K562 (cell line): ENCODE measurements at regions of chr2 and their contacts with region 1.

Region 1: DNA sequence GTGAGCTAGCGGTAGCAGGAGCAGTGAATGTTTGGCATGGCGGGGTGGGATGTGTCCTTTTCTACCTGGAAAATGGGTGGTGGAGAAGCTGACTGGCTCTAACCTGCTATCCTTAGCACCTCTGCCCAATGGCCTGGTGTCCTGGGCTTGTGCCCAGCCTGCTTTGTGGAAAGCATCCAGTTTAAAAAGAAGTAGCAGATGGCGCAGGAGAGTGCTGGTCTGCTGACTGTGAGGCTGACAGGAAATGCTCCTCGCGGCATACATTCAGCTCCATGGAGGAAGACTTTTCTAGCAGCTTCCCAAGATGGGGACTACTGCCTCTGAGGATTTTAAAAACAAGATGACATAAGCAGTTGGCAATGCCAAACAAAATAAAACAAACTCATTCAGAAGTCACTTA is 56.2 kb upstream of the LYPD6B start:
- DNase-seq: no peak
- ATAC-seq: no peak
- H3K4me3 ChIP-seq: no peak overlapping the region
- H3K27ac ChIP-seq: no peak overlapping the region
- H3K4me1 ChIP-seq: no peaks in the 10 kb centered on the region
- H3K27me3 ChIP-seq: no peaks in the 10 kb centered on the region
- CTCF ChIP-seq: no peak
- EP300 ChIP-seq: no peak
- POLR2A ChIP-seq: no peak
- RAD21 ChIP-seq: no peak

Region 2: GRCh38 chr2:148967526-148968123 is 14.7 kb before region 1 on chr2:
- CTCF ChIA-PET with region 1: no interaction called
- POLR2A ChIA-PET with region 1: interaction called, 10 read pairs
- in situ Hi-C with region 1: no loop called
- intact Hi-C with region 1: no loop called
- DNase-seq: no peak
- ATAC-seq: no peak; the same call in 2 of the 3 replicates
- H3K4me3 ChIP-seq: no peak overlapping the region
- H3K27ac ChIP-seq: no peak overlapping the region
- H3K4me1 ChIP-seq: no peaks in the 10 kb centered on the region
- H3K27me3 ChIP-seq: peaks cover 0 to 11% of the 10 kb centered on the region in 2 experiments; a peak in 2 of 5 replicates
- CTCF ChIP-seq: 0 out of 6 replicates have a peak, but pooled peaks of 1 of the 3 experiments have one; percentile 18
- EP300 ChIP-seq: no peak
- POLR2A ChIP-seq: no peak
- RAD21 ChIP-seq: peak in 1 of 2 experiments; percentile 27; a peak in 3 of 4 replicates